ENCODE measurements at regions of chr2 and their contacts with region 1.

Region 1: DNA sequence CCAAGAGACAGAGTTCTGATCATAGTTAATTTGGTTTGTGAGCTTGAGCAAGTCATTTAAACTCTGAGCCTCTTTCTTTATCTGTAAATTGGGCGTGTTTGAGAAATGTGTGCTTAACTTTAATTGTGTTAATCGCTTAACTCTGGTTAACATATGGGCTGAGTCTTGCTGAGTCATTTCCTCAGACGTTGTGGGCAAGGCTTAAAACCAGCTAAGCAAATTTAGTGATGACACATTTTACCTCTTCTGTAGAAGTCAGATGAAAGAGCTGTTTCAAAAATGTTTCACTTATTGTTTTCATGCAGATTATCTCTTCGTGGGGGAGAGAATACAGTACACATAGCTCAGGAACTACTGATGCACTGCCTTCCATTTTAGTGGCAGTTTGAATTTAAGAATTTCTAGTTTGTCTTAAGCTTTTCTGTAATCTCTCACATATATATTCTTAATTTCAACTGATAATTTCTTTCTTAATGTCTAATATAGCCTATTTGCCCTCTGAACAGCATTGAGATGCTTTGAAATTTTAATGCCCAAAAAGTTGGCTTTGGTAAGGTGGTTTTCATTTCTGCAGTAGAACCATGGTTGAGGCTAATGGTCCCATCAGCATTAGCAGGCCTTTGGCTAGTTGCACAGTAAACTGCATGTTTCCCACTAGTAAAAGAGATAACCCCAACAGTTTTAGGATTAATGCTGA is 34.9 kb downstream of the RAB10 start:
- DNase-seq: peak; percentile 87
- H3K4me3 Mint-ChIP-seq: peak overlapping the region; percentile 58
- H3K27ac Mint-ChIP-seq: peak overlapping the region; percentile 89
- H3K4me1 Mint-ChIP-seq: peaks cover 46% of the 10 kb centered on the region
- H3K27me3 Mint-ChIP-seq: no peaks in the 10 kb centered on the region

Region 2: DNA sequence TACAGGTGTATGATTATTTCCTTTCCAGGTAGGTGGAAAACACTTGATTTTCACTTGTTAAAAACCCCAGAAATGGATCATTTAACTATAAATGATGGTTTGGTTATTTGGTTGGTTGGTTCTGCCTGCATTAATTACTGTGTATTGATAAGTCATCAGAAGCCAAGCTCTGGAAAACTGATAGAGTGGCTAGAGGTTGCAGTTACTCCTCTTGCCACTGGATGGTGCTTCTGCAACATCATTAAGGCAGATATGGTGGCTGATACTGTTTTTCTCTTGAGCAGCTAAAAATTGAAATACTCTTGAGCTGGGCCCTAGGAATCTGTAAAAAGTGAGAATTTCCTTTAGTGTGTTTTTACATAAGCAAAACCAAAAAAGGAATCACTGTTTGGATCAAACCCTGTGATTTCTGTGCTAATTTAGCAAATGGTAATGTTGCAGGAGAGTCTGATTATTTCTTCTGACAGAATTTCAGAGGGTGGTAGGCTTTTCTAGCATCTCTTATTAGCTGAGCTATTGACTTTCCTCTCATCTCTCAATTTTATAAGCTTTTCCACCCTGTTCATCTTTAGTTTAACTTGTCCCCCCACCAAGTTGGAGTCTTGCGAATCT is 19.4 kb after region 1 on chr2:
- intact Hi-C with region 1: loop called (anchors 1 kb)
- DNase-seq: peak; percentile 74
- H3K4me3 Mint-ChIP-seq: no peak overlapping the region
- H3K27ac Mint-ChIP-seq: no peak overlapping the region
- H3K4me1 Mint-ChIP-seq: peaks cover 50% of the 10 kb centered on the region
- H3K27me3 Mint-ChIP-seq: no peaks in the 10 kb centered on the region

Measured in activated CD4-positive, alpha-beta T cell treated with anti-CD3 and anti-CD28 coated beads, Interleukin-2, amount 10 ng/mL, durations not matched to agents 24 days and 14 days (primary cell).